CD8-positive, alpha-beta T cell (primary cell): ENCODE measurements at regions of chr3 and their contacts with region 1.

Region 1: GRCh38 chr3:169764452-169765274 is at the start of gene TERC:
- DNase-seq: peak; percentile 84 to 98 (median 93)
- ATAC-seq: peak; percentile 84
- H3K4me3 ChIP-seq: peak within 1 kb of the TSS; percentile 79 to 81
- H3K4me3 Mint-ChIP-seq: peak within 1 kb of the TSS; percentile 96
- H3K27ac ChIP-seq: peak within 1 kb of the TSS; percentile 91 to 93
- H3K27ac Mint-ChIP-seq: peak within 1 kb of the TSS; percentile 98
- H3K4me1 ChIP-seq: peaks cover 14% of the 10 kb centered on the region
- H3K4me1 Mint-ChIP-seq: peaks cover 25% of the 10 kb centered on the region
- H3K27me3 ChIP-seq: no peaks in the 10 kb centered on the region
- H3K27me3 Mint-ChIP-seq: no peaks in the 10 kb centered on the region
- CTCF ChIP-seq: no peak
- total RNA-seq, gene TERC: 12.7 to 13.3 TPM

Region 2: GRCh38 chr3:169812332-169813235 is 47.9 kb after region 1 on chr3 and contains the starts of genes LRRC34 and LRRIQ4:
- CTCF ChIA-PET with region 1: no interaction called
- POLR2A ChIA-PET with region 1: no interaction called
- intact Hi-C with region 1: loop called (anchors 1 to 2 kb)
- DNase-seq: peak; percentile 12 to 79 (median 68)
- ATAC-seq: peak; percentile 37
- H3K4me3 ChIP-seq: peak within 1 kb of the TSS; percentile 47 to 54
- H3K4me3 Mint-ChIP-seq: peak within 1 kb of the TSS; percentile 89
- H3K27ac ChIP-seq: peak within 1 kb of the TSS; percentile 2
- H3K27ac Mint-ChIP-seq: peak within 1 kb of the TSS; percentile 74
- H3K4me1 ChIP-seq: peaks cover 16% of the 10 kb centered on the region
- H3K4me1 Mint-ChIP-seq: peaks cover 28% of the 10 kb centered on the region
- H3K27me3 ChIP-seq: no peaks in the 10 kb centered on the region
- H3K27me3 Mint-ChIP-seq: no peaks in the 10 kb centered on the region
- CTCF ChIP-seq: no peak
- total RNA-seq, gene LRRC34: 0.36 to 0.54 TPM
- total RNA-seq, gene LRRIQ4: not detected

Region 3: GRCh38 chr3:169980055-169980454 is 215.4 kb after region 1 on chr3:
- CTCF ChIA-PET with region 1: no interaction called
- POLR2A ChIA-PET with region 1: no interaction called
- intact Hi-C with region 1: loop called in 1 of 2 experiments (anchors 5 kb)
- DNase-seq: no peak
- ATAC-seq: no peak
- H3K4me3 ChIP-seq: no peak overlapping the region
- H3K4me3 Mint-ChIP-seq: no peak overlapping the region
- H3K27ac ChIP-seq: no peak overlapping the region
- H3K27ac Mint-ChIP-seq: no peak overlapping the region
- H3K4me1 ChIP-seq: no peaks in the 10 kb centered on the region
- H3K4me1 Mint-ChIP-seq: peaks cover 8% of the 10 kb centered on the region
- H3K27me3 ChIP-seq: no peaks in the 10 kb centered on the region
- H3K27me3 Mint-ChIP-seq: no peaks in the 10 kb centered on the region
- CTCF ChIP-seq: no peak

Region 4: GRCh38 chr3:170357176-170357919 is 592.7 kb after region 1 on chr3 and contains the start of gene SKIL:
- CTCF ChIA-PET with region 1: no interaction called
- POLR2A ChIA-PET with region 1: interaction called, 3 read pairs
- intact Hi-C with region 1: loop called (anchors 1 to 5 kb)
- DNase-seq: peak; percentile 94 to 99 (median 97)
- ATAC-seq: peak; percentile 69
- H3K4me3 ChIP-seq: peak within 1 kb of the TSS; percentile 55 to 76
- H3K4me3 Mint-ChIP-seq: peak within 1 kb of the TSS; percentile 95
- H3K27ac ChIP-seq: peak within 1 kb of the TSS; percentile 91 to 96
- H3K27ac Mint-ChIP-seq: peak within 1 kb of the TSS; percentile 99
- H3K4me1 ChIP-seq: peaks cover 24% of the 10 kb centered on the region
- H3K4me1 Mint-ChIP-seq: peaks cover 52% of the 10 kb centered on the region
- H3K27me3 ChIP-seq: no peaks in the 10 kb centered on the region
- H3K27me3 Mint-ChIP-seq: no peaks in the 10 kb centered on the region
- CTCF ChIP-seq: no peak
- total RNA-seq, gene SKIL: 160 to 177 TPM

Region 5: DNA sequence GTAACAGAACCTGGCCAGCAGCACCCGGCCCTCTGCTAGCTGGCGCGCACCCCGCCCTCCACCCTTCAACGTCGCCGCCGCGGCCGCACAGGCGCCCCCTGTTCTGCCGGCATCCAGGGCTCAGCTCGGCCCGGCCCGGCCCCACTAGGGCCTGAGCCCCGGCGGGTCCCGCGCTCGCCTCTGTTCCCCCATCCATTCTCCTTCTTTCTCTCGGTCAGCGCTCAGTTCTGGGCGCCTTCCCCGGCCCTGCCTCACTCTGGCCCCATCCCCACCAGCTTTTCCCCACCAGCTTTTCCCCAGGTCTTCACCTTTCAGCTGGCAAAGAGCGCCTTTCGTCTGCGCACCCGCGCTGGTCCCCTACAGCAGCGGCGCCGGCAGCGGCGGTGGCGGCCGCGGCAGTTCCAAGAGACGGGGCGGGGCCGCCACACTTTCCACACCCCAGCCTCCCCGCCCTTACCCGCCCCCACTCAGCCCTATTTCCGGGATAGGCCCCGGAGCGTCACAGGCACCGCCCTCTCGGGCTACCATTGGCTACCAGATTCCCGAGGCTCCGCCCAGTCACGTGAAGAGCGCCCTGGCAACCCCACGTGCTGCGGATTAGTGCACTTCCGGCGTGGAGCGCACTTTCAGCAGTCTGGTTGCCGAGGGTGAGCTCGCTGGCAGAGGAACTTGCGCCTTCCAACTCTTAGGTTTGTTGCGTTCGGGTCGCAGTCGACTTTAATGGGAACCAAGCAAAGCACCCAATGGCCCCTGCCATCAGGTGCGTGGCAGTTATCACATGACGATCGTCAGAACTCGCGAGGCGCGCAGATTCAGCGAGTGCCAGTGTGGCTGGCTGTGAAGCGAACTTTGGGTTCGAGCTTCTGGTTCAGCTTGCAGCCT is 1143.8 kb after region 1 on chr3 and contains the start of gene EIF5A2:
- CTCF ChIA-PET with region 1: interaction called, 3 read pairs
- POLR2A ChIA-PET with region 1: no interaction called
- intact Hi-C with region 1: loop called in 1 of 2 experiments (anchors 5 kb)
- DNase-seq: peak; percentile 89 to 98 (median 95)
- ATAC-seq: peak; percentile 96
- H3K4me3 ChIP-seq: peak within 1 kb of the TSS; percentile 66 to 68
- H3K4me3 Mint-ChIP-seq: peak within 1 kb of the TSS; percentile 95
- H3K27ac ChIP-seq: peak within 1 kb of the TSS; percentile 67 to 79
- H3K27ac Mint-ChIP-seq: peak within 1 kb of the TSS; percentile 97
- H3K4me1 ChIP-seq: peaks cover 12% of the 10 kb centered on the region
- H3K4me1 Mint-ChIP-seq: peaks cover 20% of the 10 kb centered on the region
- H3K27me3 ChIP-seq: no peaks in the 10 kb centered on the region
- H3K27me3 Mint-ChIP-seq: no peaks in the 10 kb centered on the region
- CTCF ChIP-seq: no peak
- total RNA-seq, gene EIF5A2: 10.6 to 12.7 TPM